ENCODE measurements at regions of chr10 and their contacts with region 1.

Region 1: DNA sequence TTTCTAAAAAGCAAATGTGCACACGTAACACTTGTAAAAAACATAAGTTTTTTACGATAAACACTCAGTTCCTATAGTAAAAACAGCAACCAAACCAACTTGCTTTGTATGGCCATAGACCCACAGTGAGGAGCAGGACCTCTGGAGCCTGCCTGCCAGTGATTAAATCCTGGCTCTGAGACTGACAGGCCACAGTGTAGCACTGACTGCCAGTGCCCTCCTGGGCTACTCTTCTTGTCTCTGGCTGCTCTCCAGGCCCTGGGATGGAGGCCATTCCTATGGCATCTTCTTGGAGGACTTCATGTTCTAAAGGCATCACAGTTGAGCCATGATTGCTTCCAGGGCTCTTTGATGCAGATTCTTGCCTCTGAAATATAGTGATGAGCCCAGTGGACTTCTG is 22.7 kb upstream of the TMEM254 start:
- DNase-seq: no peak
- H3K4me3 Mint-ChIP-seq: no peak overlapping the region
- H3K27ac Mint-ChIP-seq: no peak overlapping the region
- H3K4me1 Mint-ChIP-seq: peaks cover 5% of the 10 kb centered on the region
- H3K27me3 Mint-ChIP-seq: no peaks in the 10 kb centered on the region
- CTCF ChIP-seq: no peak

Region 2: DNA sequence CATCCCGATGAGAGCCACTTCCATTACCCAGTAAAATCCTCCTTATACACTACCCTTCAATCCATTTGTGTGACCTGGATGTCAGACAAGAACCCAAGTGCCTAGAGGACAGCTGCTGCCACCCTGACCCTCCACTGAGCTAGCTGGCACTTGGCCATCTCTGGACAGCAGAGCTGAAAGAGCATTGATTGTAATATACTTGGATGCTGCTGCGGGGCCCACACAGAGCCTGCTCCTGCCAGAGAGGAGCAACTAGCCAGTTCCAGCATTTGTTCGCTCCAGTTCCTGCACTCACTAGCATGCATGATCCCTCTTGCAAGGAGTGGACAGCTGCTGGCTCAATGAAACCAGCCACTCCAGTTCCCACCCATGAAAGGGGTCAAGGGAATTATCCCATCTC is 14.3 kb after region 1 on chr10:
- CTCF ChIA-PET with region 1: interaction called, 21 read pairs
- POLR2A ChIA-PET with region 1: interaction called, 3 read pairs
- intact Hi-C with region 1: no loop called
- DNase-seq: no peak
- H3K4me3 Mint-ChIP-seq: no peak overlapping the region
- H3K27ac Mint-ChIP-seq: no peak overlapping the region
- H3K4me1 Mint-ChIP-seq: no peaks in the 10 kb centered on the region
- H3K27me3 Mint-ChIP-seq: no peaks in the 10 kb centered on the region
- CTCF ChIP-seq: no peak